ENCODE measurements at regions of chrX and their contacts with region 1.

Region 1: DNA sequence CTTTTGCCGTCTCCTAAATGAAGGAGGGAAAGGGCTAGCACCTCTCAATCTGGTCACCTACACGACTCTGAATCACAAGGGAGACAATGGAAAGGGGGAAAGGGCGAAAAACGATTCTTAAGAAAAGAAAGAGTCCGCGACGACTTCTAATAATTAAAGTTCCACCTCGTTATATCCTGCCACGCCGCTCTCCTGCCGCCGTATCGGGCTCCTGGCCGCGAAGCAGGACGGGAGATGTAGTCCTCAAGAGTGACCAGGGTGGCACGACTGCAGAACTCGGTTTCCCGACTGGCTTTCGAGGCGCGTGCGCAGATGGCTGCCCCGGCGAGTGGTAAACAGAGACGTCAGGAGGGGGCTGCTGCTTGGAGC is at the start of gene FOXO4:
- DNase-seq: peak; percentile 79 to 93
- ATAC-seq: peak; percentile 86 to 95 (median 89)
- H3K4me3 ChIP-seq: peak within 1 kb of the TSS; percentile 72
- H3K4me3 Mint-ChIP-seq: peak within 1 kb of the TSS; percentile 96
- H3K27ac ChIP-seq: peak within 1 kb of the TSS; percentile 69
- H3K27ac Mint-ChIP-seq: peak within 1 kb of the TSS; percentile 90 to 96
- H3K4me1 ChIP-seq: peaks cover 36% of the 10 kb centered on the region
- H3K4me1 Mint-ChIP-seq: peaks cover 22 to 27% of the 10 kb centered on the region in 2 donors
- H3K27me3 ChIP-seq: no peaks in the 10 kb centered on the region
- H3K27me3 Mint-ChIP-seq: peaks cover 0 to 14% of the 10 kb centered on the region in 2 donors
- CTCF ChIP-seq: no peak
- total RNA-seq, gene FOXO4: 47.3 to 57.2 (median 51.2) TPM

Region 2: GRCh38 chrX:71068049-71068763 is 27.3 kb before region 1 on chrX and contains the start of gene SNX12:
- intact Hi-C with region 1: loop called (anchors 1 kb)
- DNase-seq: peak; percentile 81 to 93
- ATAC-seq: peak; percentile 92 to 99 (median 93)
- H3K4me3 ChIP-seq: peak within 1 kb of the TSS; percentile 85
- H3K4me3 Mint-ChIP-seq: peak within 1 kb of the TSS; percentile 96
- H3K27ac ChIP-seq: peak within 1 kb of the TSS; percentile 95
- H3K27ac Mint-ChIP-seq: peak within 1 kb of the TSS; percentile 88 to 97
- H3K4me1 ChIP-seq: peaks cover 9% of the 10 kb centered on the region
- H3K4me1 Mint-ChIP-seq: peaks cover 11 to 21% of the 10 kb centered on the region in 2 donors
- H3K27me3 ChIP-seq: no peaks in the 10 kb centered on the region
- H3K27me3 Mint-ChIP-seq: no peaks in the 10 kb centered on the region
- CTCF ChIP-seq: no peak
- total RNA-seq, gene SNX12: 36.0 to 40.1 (median 38.6) TPM

Region 3: DNA sequence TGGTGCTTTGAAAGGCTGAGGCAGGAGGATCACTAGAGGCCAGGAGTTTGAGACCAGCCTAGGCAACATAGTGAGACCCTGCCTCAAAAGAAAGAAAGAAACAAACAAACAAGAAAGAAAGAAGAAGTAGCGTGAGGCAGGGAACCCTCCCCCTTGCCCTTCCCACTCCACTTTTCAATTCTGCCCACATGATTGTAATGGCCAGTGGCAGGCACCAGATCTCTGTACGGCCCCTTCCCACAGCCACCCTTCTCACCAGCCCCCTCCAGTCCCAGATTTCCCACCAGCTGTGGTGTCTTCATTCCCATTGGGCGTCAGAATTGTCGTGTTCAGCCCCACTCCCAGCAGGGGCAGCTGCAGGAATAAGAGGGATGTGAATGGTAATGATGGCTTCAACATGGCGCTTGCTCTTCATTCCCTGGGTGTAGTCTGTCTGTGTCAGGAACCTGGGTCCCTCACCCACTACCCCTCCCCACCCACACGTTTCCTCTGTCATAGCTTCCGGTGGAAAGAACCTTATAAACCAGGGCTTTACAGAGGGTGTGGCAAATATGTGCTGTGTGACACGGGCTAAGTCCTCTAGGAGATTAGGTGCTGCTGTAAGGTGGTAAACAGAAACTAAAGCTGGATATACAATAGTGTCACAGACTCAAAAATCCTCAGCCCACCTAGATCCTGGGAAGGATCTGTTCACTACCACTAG is 15.8 kb after region 1 on chrX and contains the start of gene IL2RG:
- intact Hi-C with region 1: loop called (anchors 2 kb)
- DNase-seq: peak; percentile 60 to 92
- ATAC-seq: peak; percentile 76 to 95 (median 85)
- H3K4me3 ChIP-seq: peak within 1 kb of the TSS; percentile 74
- H3K4me3 Mint-ChIP-seq: peak within 1 kb of the TSS; percentile 84
- H3K27ac ChIP-seq: peak within 1 kb of the TSS; percentile 100
- H3K27ac Mint-ChIP-seq: peak within 1 kb of the TSS; percentile 97 to 99
- H3K4me1 ChIP-seq: peaks cover 57% of the 10 kb centered on the region
- H3K4me1 Mint-ChIP-seq: peaks cover 57 to 63% of the 10 kb centered on the region in 2 donors
- H3K27me3 ChIP-seq: no peaks in the 10 kb centered on the region
- H3K27me3 Mint-ChIP-seq: no peaks in the 10 kb centered on the region
- CTCF ChIP-seq: no peak
- total RNA-seq, gene IL2RG: 506 to 577 (median 550) TPM

Region 4: GRCh38 chrX:71128915-71129765 is 33.6 kb after region 1 on chrX:
- intact Hi-C with region 1: loop called (anchors 1 kb)
- DNase-seq: peak; percentile 68 to 86
- ATAC-seq: peak; percentile 88 to 97 (median 93)
- H3K4me3 ChIP-seq: no peak overlapping the region
- H3K4me3 Mint-ChIP-seq: no peak overlapping the region
- H3K27ac ChIP-seq: peak overlapping the region; percentile 26
- H3K27ac Mint-ChIP-seq: peak overlapping the region; percentile 47 to 85
- H3K4me1 ChIP-seq: peaks cover 10% of the 10 kb centered on the region
- H3K4me1 Mint-ChIP-seq: peaks cover 6 to 26% of the 10 kb centered on the region in 2 donors
- H3K27me3 ChIP-seq: no peaks in the 10 kb centered on the region
- H3K27me3 Mint-ChIP-seq: no peaks in the 10 kb centered on the region
- CTCF ChIP-seq: peak; percentile 64

Region 5: GRCh38 chrX:71181910-71182799 is 86.6 kb after region 1 on chrX:
- intact Hi-C with region 1: loop called (anchors 5 kb)
- DNase-seq: peak; percentile 69 to 92
- ATAC-seq: peak; percentile 90 to 96 (median 91)
- H3K4me3 ChIP-seq: peak overlapping the region; percentile 75
- H3K4me3 Mint-ChIP-seq: peak overlapping the region; percentile 93
- H3K27ac ChIP-seq: peak overlapping the region; percentile 88
- H3K27ac Mint-ChIP-seq: peak overlapping the region; percentile 94 to 95
- H3K4me1 ChIP-seq: peaks cover 19% of the 10 kb centered on the region
- H3K4me1 Mint-ChIP-seq: peaks cover 0 to 7% of the 10 kb centered on the region in 2 donors
- H3K27me3 ChIP-seq: no peaks in the 10 kb centered on the region
- H3K27me3 Mint-ChIP-seq: no peaks in the 10 kb centered on the region
- CTCF ChIP-seq: no peak